Sigmoid colon (tissue), 7 donors: ENCODE measurements at regions of chr5 and their contacts with region 1.

Region 1: GRCh38 chr5:181260387-181261319 is at the start of gene TRIM52:
- DNase-seq: peak; percentile 93
- H3K4me3 ChIP-seq: peak within 1 kb of the TSS; percentile 71 to 98 (median 86)
- H3K27ac ChIP-seq: peak within 1 kb of the TSS; percentile 94 to 100 (median 100)
- H3K4me1 ChIP-seq: peaks cover 0 to 54% (median 43%) of the 10 kb centered on the region in 4 donors
- H3K27me3 ChIP-seq: no peaks in the 10 kb centered on the region
- CTCF ChIP-seq: no peak
- EP300 ChIP-seq: no peak
- POLR2A ChIP-seq: peak; percentile 86 to 88
- total RNA-seq, gene TRIM52: 7.1 to 26.9 (median 16.0) TPM

Region 2: DNA sequence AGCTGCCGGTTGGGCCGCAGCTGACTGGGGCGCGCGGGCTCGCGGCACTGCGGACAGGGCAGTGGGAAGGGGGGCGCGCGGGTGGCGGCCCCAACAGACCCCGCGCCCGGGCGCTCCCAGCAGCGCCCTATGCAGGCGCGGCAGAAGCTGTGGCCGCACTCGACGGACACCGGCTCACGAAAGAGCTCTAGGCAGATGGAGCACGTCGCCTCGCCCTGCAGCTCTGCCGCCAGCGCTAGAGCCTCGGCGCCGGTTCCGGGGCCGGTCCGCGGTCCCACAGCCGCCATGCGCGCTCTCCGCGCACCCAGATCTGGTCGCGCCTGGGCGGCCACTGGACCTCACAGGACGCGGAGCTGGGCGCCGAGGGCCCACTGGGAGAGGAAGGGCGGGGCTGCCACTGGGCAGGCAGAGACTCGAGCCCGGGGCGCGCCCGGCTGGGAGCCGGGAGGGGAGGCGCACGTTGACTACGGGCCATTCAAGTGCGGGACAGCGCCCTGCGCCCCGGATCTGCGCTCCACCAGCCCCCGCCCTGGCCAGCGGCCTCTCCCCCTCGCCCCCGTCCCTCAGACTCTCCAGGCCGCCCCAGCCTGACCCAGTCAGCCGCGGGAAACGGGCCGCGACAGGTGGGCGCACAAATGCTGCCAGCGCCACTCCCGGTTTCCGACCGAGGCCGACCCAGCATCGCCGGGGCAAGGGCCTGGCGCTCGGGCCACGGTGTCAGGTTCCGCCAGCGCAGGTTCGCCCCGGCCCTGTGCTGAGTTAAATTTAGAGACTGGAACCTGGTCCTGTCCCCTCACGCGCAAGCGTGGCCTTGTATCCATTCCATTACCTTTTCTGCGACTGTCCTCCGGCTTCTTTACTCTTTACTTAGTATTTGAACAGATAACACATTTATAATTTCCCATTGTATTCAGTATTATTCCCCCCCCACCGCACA is 55.6 kb before region 1 on chr5 and contains the start of gene TRIM7:
- intact Hi-C with region 1: loop called (anchors 1 kb)
- DNase-seq: peak; percentile 76
- H3K4me3 ChIP-seq: peak within 1 kb of the TSS; percentile 42 to 71 (median 62)
- H3K27ac ChIP-seq: peak within 1 kb of the TSS; percentile 71 to 85 (median 83)
- H3K4me1 ChIP-seq: peaks cover 0 to 38% (median 36%) of the 10 kb centered on the region in 4 donors
- H3K27me3 ChIP-seq: peaks cover 0 to 12% (median 11%) of the 10 kb centered on the region in 3 donors
- CTCF ChIP-seq: no peak
- EP300 ChIP-seq: no peak
- POLR2A ChIP-seq: no peak
- total RNA-seq, gene TRIM7: 0.55 to 2.1 (median 1.1) TPM

Region 3: GRCh38 chr5:181223058-181223728 is 37.5 kb before region 1 on chr5 and contains the start of gene TRIM41:
- intact Hi-C with region 1: loop called (anchors 1 kb)
- DNase-seq: peak; percentile 100
- H3K4me3 ChIP-seq: peak within 1 kb of the TSS; percentile 61 to 80 (median 70)
- H3K27ac ChIP-seq: peak within 1 kb of the TSS; percentile 96 to 98 (median 96)
- H3K4me1 ChIP-seq: peaks cover 4 to 33% (median 21%) of the 10 kb centered on the region in 4 donors
- H3K27me3 ChIP-seq: no peaks in the 10 kb centered on the region
- CTCF ChIP-seq: no peak
- EP300 ChIP-seq: peak in 2 of 4 donors; percentile 12 to 22
- POLR2A ChIP-seq: peak; percentile 91 to 95
- total RNA-seq, gene TRIM41: 8.2 to 15.3 (median 11.8) TPM

Region 4: DNA sequence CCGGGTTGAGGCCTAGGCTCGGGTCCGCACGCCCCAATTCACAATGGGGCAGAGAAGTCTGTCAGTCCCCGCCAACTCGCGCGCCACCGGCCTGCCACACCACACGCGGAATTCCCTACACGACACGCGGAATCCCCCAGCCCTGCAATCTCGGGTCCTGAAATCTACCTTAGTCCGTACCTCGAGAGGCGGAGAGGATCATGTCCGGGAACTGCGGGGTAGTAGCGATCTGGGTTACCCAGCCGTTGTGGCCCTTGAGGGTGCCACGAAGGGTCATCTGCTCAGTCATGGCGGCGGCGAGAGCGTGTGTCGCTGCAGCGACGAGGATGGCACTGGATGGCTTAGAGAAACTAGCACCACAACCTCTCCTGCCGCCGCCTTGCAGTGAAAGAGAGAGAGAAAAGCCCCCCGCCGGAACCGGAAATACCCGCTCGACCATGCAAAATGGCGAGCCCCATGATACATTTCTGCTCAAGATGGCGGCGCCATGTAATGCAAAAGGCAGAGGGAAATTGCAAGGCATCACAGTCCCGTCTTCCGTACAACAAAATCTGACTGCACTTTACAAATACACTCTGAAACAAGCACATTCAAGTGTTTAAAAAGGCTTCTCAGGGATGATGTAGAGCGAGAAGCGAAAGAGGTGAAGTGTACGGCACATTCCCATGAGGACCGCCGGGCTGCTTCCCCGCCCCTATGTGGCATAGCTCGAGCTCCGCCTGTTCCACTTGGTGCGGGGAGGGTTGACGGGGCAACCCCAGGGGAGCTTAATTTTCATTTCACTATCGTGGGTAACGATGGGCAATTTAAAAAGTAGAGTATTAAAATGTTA is 16.9 kb before region 1 on chr5 and contains the start of gene RACK1:
- intact Hi-C with region 1: loop called (anchors 2 kb)
- DNase-seq: peak; percentile 93
- H3K4me3 ChIP-seq: peak within 1 kb of the TSS; percentile 66 to 79 (median 74)
- H3K27ac ChIP-seq: peak within 1 kb of the TSS; percentile 95 to 99 (median 96)
- H3K4me1 ChIP-seq: peaks cover 0 to 62% (median 50%) of the 10 kb centered on the region in 4 donors
- H3K27me3 ChIP-seq: no peaks in the 10 kb centered on the region
- CTCF ChIP-seq: no peak
- EP300 ChIP-seq: no peak
- POLR2A ChIP-seq: peak; percentile 54 to 69
- total RNA-seq, gene RACK1: 2,029 to 2,209 (median 2,163) TPM